ENCODE measurements at regions of chr9 and their contacts with region 1.

Region 1: DNA sequence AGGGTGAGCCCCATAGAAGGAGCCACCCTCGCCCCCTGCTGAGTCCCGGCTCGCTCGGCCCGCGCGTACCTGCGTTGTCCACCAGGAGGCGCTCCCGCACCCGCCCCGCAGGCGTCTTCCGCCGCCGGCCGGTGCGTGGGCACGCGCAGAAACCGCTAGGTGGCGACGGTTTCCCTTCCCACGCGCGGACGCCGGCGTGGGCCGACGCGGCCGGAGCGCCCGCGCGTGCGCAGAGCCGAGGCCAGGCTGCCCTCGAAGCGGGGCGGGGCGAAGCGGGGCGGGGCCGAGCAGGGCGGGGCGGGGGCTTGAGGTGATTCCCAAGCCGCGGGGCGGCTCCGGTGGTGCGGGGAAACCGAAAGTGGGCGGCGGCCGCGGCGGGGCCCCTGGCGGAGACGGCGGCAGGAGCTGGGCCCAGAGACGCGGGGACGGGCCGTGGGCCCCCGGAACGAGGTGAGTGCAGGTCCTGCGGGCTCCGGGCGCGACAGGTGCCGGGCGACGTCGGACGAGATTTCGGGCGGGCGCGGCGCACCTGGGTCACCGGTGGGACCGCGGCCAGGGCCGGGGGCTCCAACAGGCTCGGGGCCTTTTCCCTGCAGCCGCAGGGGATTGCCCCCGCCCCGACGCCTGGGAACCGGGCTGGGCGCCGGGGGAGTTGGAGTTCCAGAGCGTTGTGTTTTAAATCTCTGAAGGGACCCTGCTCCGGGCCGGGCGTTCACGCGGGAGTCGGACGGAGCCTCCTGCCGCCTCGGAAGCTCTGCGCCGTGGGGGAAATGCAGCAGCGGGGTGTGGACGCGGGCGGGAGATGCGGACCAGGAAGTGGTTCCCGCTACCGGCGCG is at the start of gene TDRD7:
- DNase-seq: peak; percentile 36 to 92
- H3K4me3 ChIP-seq: peak within 1 kb of the TSS; percentile 85 to 97
- H3K27ac ChIP-seq: peak within 1 kb of the TSS; percentile 82
- H3K4me1 ChIP-seq: peaks cover 0 to 8% of the 10 kb centered on the region in 2 donors
- H3K27me3 ChIP-seq: no peaks in the 10 kb centered on the region
- CTCF ChIP-seq: peak; percentile 96 to 99 (median 99)
- total RNA-seq, gene TDRD7: 3.0 TPM

Region 2: DNA sequence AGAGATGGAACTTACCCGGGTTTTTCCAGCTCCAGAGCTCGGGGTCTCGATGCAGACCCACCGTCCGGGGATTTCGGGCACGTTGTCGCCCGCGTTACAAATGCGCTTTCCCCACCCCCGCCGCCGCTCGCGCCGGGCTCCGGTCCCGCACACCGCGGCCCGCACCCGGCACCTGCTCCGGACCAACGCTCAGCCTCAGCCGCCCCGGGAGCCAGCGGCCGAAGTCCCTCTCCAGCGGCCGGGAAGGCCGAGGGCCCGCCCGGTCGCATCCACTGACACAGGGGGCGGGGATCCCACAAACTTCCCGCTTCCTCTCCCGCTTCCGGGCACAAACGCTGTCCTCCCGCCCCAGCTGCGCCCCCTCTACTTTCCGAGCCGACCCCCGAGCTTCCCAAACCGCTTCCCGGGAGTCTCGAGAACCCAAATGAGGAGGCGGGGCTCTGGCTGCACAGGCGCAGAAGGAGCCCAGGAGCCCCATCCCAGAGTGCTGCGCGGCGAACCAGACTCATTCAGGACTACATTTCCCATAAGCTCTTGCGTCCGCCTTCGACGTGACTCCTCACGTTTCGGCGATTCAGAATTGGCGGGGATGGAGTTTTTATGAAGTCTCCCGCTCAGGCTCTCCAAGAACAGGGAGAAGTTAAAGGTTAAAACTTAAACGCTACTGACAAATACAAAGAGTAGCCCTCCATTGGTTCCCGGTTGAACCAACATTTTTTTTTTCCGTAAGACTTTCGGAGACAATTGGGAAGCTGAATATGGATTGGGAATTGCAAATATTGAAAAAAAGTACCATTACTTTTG is 557.7 kb before region 1 on chr9 and contains the start of gene ZNF782:
- intact Hi-C with region 1: loop called (anchors 5 kb)
- DNase-seq: peak; percentile 66 to 96
- H3K4me3 ChIP-seq: peak within 1 kb of the TSS; percentile 87 to 97
- H3K27ac ChIP-seq: peak within 1 kb of the TSS; percentile 66 to 84
- H3K4me1 ChIP-seq: peaks cover 7 to 15% of the 10 kb centered on the region in 2 donors
- H3K27me3 ChIP-seq: no peaks in the 10 kb centered on the region
- CTCF ChIP-seq: no peak
- total RNA-seq, gene ZNF782: 8.6 TPM

Region 3: DNA sequence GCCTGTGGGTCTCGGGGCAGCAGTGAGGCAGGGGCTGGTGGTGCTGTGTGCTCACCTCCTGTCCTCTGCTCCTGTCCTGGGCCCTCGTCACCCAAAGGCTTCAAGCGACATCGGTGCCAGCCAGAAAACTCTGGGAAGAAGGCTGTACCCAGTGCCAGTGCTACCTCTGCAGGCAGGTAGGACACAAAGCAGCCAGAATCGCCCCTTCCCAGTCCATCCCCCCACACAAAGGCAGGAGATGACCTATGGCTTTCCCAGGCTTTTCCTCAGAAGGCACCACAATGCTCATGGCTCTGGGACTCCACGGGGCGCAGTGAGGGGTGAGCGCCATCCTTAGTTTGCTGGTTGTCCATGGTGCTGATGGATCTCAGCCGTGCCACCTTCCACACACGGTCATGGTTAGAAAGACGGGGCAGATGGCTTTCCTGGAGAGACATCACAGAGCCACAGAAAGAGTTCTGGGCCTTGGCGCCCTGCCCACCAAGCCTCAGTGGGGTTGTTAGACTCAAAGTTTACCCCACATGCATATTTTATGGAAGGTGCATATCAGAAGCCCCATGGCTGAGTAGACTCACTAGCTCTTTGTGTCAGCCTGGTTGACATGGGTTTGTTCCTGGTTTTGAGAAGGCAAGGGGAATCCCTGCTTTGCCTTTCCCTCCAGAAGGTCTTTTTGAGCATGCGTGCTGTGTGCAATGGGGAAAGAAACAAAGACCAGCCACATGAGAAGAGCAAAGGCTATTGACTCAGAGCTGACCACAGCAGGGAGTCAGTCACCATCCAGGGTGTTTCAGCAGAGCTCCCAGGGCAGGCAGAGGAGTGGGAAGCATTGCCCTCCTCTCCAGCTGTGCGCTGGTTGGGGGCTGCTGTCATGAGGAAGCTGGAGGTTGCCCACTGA is 49.5 kb before region 1 on chr9:
- intact Hi-C with region 1: no loop called
- DNase-seq: no peak
- H3K4me3 ChIP-seq: no peak overlapping the region
- H3K27ac ChIP-seq: no peak overlapping the region
- H3K4me1 ChIP-seq: no peaks in the 10 kb centered on the region
- H3K27me3 ChIP-seq: no peaks in the 10 kb centered on the region
- CTCF ChIP-seq: no peak

Region 4: DNA sequence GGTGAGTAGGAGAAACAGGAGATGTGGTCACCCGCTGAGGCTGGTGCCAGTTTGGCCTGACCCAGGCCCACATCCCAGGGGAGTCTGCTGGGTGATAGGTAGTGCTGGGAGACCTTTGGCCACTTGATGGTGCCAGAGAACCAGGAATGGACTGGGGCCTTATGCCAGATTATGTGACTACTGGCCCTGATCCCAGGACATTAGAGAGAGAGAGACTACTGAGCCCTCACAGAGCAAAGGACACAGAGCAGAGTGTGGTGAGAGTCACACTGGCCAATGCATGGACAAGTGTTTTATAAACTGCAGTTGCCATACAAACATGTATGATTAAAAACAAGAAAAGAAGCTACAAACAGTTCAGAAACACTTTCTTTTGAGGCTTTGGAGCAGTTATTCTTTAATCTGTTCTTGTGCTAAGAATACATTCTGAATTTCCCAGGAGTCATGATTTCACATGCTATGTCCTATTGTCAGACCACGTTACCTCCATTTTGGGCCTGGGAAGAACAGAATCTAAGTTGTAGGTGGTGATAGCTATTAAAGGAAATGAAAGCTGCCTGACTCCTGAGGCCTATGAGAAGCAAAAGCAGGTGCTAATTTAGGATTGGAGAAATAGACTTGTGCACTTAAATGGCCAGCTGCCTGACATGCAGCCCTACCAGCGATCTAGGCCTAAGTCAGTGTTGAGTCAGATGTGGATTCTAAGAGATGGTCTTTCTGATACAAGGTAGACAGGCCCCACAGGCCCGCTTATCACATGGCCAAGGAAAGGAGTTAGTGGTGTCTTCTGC is 56.8 kb after region 1 on chr9:
- intact Hi-C with region 1: loop called (anchors 5 kb)
- DNase-seq: peak; percentile 29 to 95
- H3K4me3 ChIP-seq: no peak overlapping the region
- H3K27ac ChIP-seq: peak overlapping the region; percentile 73 to 78
- H3K4me1 ChIP-seq: peaks cover 3 to 10% of the 10 kb centered on the region in 2 donors
- H3K27me3 ChIP-seq: no peaks in the 10 kb centered on the region
- CTCF ChIP-seq: peak; percentile 80 to 91 (median 85)

Region 5: DNA sequence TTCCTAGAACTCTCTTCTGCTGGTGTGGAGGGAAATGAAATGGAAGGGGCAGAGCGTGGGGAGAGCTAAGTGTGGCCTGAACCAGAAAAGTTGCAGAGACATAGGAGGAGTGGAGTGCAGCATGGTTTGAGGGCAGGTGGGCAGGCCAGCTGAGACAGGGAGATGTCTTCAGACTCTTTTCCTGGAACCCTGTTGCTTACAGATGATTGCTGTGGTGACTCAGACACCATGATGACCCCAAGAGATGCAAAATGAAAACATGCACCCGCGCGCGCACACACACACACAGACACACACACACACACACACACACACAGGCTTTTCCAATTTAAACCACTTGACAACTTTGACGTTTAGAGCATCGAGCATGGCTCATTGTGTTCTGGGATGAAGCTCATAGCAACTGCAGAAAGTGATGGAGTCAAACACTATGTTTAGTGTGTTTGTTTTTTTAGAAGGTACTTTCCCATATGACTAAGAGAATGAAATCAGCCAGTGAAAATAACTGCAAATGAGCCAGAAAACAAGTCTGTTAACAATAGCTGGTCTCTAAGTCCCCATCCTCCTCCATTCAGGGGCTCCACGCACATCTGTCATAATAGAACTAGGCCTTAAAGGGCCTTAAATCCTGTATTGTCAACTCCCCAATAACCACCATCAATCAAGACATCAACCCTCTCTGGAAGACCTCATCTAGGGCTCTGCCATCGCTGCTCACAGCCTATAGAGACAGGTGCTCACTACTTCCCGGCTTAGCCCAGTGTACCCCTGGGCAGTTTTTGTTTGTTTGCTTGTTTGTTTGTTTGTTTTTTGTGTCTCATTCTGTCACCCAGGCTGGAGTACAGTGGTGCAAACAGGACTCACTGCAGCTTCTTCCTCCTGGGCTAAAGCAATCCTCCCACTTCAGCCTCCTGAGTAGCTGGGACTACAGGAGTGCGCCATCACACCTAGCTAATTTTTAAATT is 99.1 kb after region 1 on chr9:
- intact Hi-C with region 1: no loop called
- DNase-seq: peak in 1 of 2 donors; percentile 63
- H3K4me3 ChIP-seq: no peak overlapping the region
- H3K27ac ChIP-seq: peak overlapping the region; percentile 50 to 53
- H3K4me1 ChIP-seq: peaks cover 0 to 15% of the 10 kb centered on the region in 2 donors
- H3K27me3 ChIP-seq: no peaks in the 10 kb centered on the region
- CTCF ChIP-seq: no peak

Region 6: DNA sequence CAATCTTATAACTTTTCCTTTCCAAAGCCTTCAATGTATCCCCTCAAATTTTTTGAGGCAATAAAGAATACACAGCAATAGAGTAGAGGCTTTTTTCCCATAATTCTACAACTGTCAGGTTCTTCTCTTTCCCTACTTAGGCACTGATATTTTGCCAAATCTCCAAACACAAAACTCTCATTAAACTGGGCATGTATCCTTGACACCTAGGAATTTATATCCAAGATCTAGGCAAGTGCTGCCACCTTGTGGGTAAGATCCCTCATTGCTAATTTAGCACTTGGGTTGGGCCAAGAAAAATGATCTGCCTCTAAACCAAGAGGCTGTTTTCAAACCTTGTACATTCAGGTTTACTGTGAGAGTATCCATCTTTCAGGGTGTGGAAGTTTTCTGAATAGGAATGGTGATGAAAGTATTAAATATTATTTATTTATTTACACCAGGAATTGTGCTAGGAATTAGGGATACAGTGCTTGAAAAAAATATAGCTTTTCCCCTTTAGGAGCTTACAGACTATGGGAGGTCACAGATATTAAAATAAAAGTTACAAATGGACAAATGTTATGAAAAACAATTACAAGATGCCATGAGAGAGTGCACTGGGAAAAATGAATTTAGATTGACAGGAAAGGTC is 203.5 kb after region 1 on chr9:
- intact Hi-C with region 1: loop called (anchors 2 kb)
- DNase-seq: peak in 1 of 2 donors; percentile 76
- H3K4me3 ChIP-seq: no peak overlapping the region
- H3K27ac ChIP-seq: no peak overlapping the region
- H3K4me1 ChIP-seq: peaks cover 0 to 4% of the 10 kb centered on the region in 2 donors
- H3K27me3 ChIP-seq: no peaks in the 10 kb centered on the region
- CTCF ChIP-seq: peak; percentile 79 to 83 (median 79)

Region 7: GRCh38 chr9:97632985-97633858 is 221.2 kb after region 1 on chr9 and contains the starts of genes NCBP1 and TSTD2:
- intact Hi-C with region 1: loop called (anchors 5 kb)
- DNase-seq: peak; percentile 91 to 98
- H3K4me3 ChIP-seq: peak within 1 kb of the TSS; percentile 81 to 89
- H3K27ac ChIP-seq: peak within 1 kb of the TSS; percentile 97 to 98
- H3K4me1 ChIP-seq: peaks cover 10 to 25% of the 10 kb centered on the region in 2 donors
- H3K27me3 ChIP-seq: no peaks in the 10 kb centered on the region
- CTCF ChIP-seq: no peak
- total RNA-seq, gene NCBP1: 5.1 TPM
- total RNA-seq, gene TSTD2: 1.4 TPM

Region 8: GRCh38 chr9:97982683-97983588 is 570.9 kb after region 1 on chr9 and contains the start of gene ANP32B:
- intact Hi-C with region 1: loop called (anchors 5 kb)
- DNase-seq: peak; percentile 63 to 95
- H3K4me3 ChIP-seq: peak within 1 kb of the TSS; percentile 86 to 91
- H3K27ac ChIP-seq: peak within 1 kb of the TSS; percentile 97 to 99
- H3K4me1 ChIP-seq: peaks cover 7 to 17% of the 10 kb centered on the region in 2 donors
- H3K27me3 ChIP-seq: no peaks in the 10 kb centered on the region
- CTCF ChIP-seq: peak; percentile 65 to 98 (median 71)
- total RNA-seq, gene ANP32B: 13.9 TPM

Region 9: GRCh38 chr9:98255578-98256296 is 843.7 kb after region 1 on chr9 and contains the start of gene TBC1D2:
- intact Hi-C with region 1: loop called (anchors 5 kb)
- DNase-seq: peak; percentile 81 to 97
- H3K4me3 ChIP-seq: peak within 1 kb of the TSS; percentile 71 to 72
- H3K27ac ChIP-seq: peak within 1 kb of the TSS; percentile 91 to 95
- H3K4me1 ChIP-seq: peaks cover 0 to 15% of the 10 kb centered on the region in 2 donors
- H3K27me3 ChIP-seq: no peaks in the 10 kb centered on the region
- CTCF ChIP-seq: peak in 1 of 3 experiments; percentile 10
- total RNA-seq, gene TBC1D2: 32.5 TPM

Measured in ascending aorta (tissue), 2 donors.